SK-N-SH (cell line): ENCODE measurements at regions of chr7 and their contacts with region 1.

Region 1: GRCh38 chr7:107150375-107151073 is 18.3 kb upstream of the HBP1 start:
- DNase-seq: peak; percentile 49
- H3K4me3 ChIP-seq: no peak overlapping the region
- H3K27ac ChIP-seq: no peak overlapping the region
- H3K4me1 ChIP-seq: peaks cover 0 to 6% of the 10 kb centered on the region in 2 experiments; a peak in 2 of 4 replicates
- H3K27me3 ChIP-seq: no peaks in the 10 kb centered on the region
- CTCF ChIP-seq: peak; percentile 91
- EP300 ChIP-seq: no peak
- RAD21 ChIP-seq: peak; percentile 91

Region 2: DNA sequence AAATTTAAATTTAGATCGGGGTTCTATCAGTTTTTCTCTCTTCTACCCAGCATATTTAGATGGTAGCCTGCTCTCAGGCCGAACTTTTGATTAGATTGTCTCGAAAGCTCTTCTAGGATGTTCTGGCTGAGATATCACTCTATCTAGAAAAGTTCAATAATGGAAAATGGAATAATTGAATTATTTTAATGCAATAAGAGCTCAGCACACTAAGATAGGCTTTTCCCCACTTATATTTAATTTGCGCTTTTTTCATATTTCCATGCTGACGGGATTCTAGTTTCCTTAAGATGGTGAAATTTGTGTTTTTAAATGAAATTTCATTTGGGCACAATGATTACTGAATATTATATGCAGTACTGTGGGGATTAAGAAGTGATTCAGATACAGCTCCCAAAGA is 211.7 kb before region 1 on chr7:
- CTCF ChIA-PET with region 1: interaction called, 118 read pairs
- POLR2A ChIA-PET with region 1: no interaction called
- DNase-seq: peak; percentile 45
- H3K4me3 ChIP-seq: no peak overlapping the region
- H3K27ac ChIP-seq: no peak overlapping the region
- H3K4me1 ChIP-seq: no peaks in the 10 kb centered on the region
- H3K27me3 ChIP-seq: no peaks in the 10 kb centered on the region
- CTCF ChIP-seq: no peak
- EP300 ChIP-seq: peak in 1 of 2 experiments; percentile 70; a peak in 2 of 4 replicates
- RAD21 ChIP-seq: 0 out of 2 replicates have a peak, but pooled peaks have one; percentile 4

Region 3: DNA sequence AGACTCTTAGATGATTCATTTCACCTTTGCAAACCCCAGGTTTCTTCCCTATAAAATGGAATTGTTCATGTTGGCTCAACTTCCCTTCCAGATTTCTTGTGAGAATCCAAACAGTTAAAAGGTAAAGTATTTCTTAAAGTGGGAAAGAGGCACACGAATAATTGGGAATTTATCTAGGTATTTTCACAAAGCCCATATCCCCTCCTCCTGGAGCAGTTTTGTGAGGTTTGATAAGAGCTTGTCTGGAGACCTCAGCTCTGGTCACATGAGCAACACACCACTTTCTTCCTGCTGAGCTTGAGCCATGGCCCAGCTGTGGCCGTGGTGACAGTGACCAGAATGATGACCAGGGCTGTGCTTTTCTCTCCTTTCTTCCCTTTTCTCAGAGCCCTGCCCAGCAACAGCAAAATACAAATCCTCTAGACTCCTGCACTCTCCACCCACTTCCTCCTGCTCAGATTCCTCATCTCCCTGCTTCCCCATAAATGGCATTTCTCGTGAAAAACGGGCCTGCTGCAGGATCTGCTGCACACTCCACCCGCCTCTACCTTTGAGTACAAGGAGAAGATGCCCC is 197.8 kb before region 1 on chr7:
- CTCF ChIA-PET with region 1: interaction called, 118 read pairs
- POLR2A ChIA-PET with region 1: no interaction called
- DNase-seq: no peak
- H3K4me3 ChIP-seq: no peak overlapping the region
- H3K27ac ChIP-seq: no peak overlapping the region
- H3K4me1 ChIP-seq: peaks cover 0 to 4% of the 10 kb centered on the region in 2 experiments; a peak in 1 of 4 replicates
- H3K27me3 ChIP-seq: no peaks in the 10 kb centered on the region
- CTCF ChIP-seq: no peak
- EP300 ChIP-seq: no peak
- RAD21 ChIP-seq: no peak

Region 4: DNA sequence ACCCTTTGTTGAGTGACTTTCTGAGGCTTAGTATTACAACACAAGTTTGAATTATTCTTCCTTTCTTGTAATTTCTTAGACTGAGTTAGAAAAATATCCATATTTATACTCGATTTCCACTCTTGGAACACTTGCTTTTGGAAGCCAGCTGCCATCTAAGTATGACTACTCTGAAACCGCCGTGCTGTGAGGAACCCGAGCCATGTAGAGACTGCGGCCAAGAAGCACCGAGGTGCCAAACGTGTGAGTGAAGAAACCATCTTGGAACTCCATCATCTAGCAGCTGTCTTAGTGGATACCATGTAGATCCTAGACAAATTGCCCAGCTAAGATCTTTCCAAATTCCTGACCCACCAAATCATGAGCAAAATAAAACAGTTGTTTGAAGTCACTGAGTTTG is 155.7 kb before region 1 on chr7:
- CTCF ChIA-PET with region 1: no interaction called
- POLR2A ChIA-PET with region 1: no interaction called
- DNase-seq: no peak
- H3K4me3 ChIP-seq: no peak overlapping the region
- H3K27ac ChIP-seq: no peak overlapping the region
- H3K4me1 ChIP-seq: no peaks in the 10 kb centered on the region; a peak in 1 of 4 replicates
- H3K27me3 ChIP-seq: no peaks in the 10 kb centered on the region
- CTCF ChIP-seq: no peak
- EP300 ChIP-seq: no peak
- RAD21 ChIP-seq: no peak

Region 5: GRCh38 chr7:107122486-107122911 is 28.0 kb before region 1 on chr7:
- CTCF ChIA-PET with region 1: interaction called, 13 read pairs
- POLR2A ChIA-PET with region 1: no interaction called
- DNase-seq: no peak
- H3K4me3 ChIP-seq: no peak overlapping the region
- H3K27ac ChIP-seq: no peak overlapping the region
- H3K4me1 ChIP-seq: peaks cover 5 to 12% of the 10 kb centered on the region in 2 experiments; a peak in 3 of 4 replicates
- H3K27me3 ChIP-seq: no peaks in the 10 kb centered on the region
- CTCF ChIP-seq: no peak
- EP300 ChIP-seq: no peak
- RAD21 ChIP-seq: no peak

Region 6: DNA sequence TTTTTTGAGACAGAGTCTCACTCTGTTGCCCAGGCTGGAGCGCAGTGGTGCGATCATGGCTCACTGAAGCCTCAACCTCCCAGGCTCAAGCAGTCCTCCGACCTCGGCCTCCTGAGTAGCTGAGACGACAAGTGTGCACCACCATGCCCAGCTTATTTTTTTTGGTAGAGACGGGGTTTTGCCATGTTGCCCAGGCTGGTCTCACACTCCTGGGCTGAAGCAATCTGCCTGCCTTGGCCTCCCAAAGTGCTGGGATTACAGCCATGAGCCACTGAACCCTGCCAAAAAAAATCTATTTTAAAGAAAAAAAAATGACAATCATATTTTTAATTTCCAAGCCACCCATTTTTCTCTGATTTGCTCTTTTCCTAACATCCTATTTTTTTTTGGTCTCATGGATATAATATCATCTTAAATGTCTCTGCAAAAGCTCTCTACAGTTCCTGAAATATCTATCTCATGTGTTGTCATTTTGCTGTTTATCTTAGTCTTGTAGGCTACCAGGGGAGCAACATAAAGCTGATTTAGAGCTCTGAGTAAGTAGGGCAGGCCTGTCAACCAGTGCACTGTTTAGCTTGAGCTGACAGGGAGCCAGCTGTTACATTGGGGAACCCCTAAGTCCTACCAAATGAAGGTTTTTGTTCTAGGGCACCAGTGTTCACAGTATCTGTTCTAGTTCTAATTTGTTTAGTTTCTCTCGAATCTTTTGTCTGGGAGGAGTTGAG is 11.7 kb before region 1 on chr7:
- CTCF ChIA-PET with region 1: interaction called, 90 read pairs
- POLR2A ChIA-PET with region 1: no interaction called
- DNase-seq: no peak
- H3K4me3 ChIP-seq: no peak overlapping the region
- H3K27ac ChIP-seq: no peak overlapping the region
- H3K4me1 ChIP-seq: no peaks in the 10 kb centered on the region; a peak in 1 of 4 replicates
- H3K27me3 ChIP-seq: no peaks in the 10 kb centered on the region
- CTCF ChIP-seq: no peak
- EP300 ChIP-seq: no peak
- RAD21 ChIP-seq: no peak

Region 7: GRCh38 chr7:107232568-107233090 is 82.1 kb after region 1 on chr7:
- CTCF ChIA-PET with region 1: no interaction called
- POLR2A ChIA-PET with region 1: no interaction called
- DNase-seq: no peak
- H3K4me3 ChIP-seq: no peak overlapping the region
- H3K27ac ChIP-seq: no peak overlapping the region
- H3K4me1 ChIP-seq: peaks cover 8 to 34% of the 10 kb centered on the region in 2 experiments
- H3K27me3 ChIP-seq: no peaks in the 10 kb centered on the region
- CTCF ChIP-seq: no peak
- EP300 ChIP-seq: no peak
- RAD21 ChIP-seq: no peak

Region 8: GRCh38 chr7:107274506-107274905 is 124.0 kb after region 1 on chr7:
- CTCF ChIA-PET with region 1: no interaction called
- POLR2A ChIA-PET with region 1: no interaction called
- DNase-seq: no peak
- H3K4me3 ChIP-seq: no peak overlapping the region
- H3K27ac ChIP-seq: no peak overlapping the region
- H3K4me1 ChIP-seq: no peaks in the 10 kb centered on the region
- H3K27me3 ChIP-seq: no peaks in the 10 kb centered on the region
- CTCF ChIP-seq: no peak
- EP300 ChIP-seq: no peak
- RAD21 ChIP-seq: no peak

Region 9: DNA sequence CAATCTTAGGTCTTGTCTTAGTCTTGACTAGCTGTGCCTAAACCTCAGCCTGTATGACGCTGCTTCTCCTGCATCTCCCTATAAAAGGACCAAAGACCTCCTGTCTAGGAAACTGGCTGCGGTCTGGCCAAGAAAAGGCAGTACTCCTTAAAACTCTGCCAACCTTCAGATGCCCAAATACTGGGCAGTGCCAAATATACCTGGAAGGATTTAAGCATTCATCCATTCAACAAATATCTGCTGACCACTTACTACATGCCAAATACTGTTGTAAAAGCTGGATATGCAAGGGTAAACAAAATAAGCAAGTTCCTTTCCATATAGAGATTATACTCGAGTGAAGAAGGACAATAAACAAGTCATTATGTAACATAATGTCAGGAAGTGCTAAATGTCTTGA is 154.1 kb after region 1 on chr7:
- CTCF ChIA-PET with region 1: no interaction called
- POLR2A ChIA-PET with region 1: no interaction called
- DNase-seq: no peak
- H3K4me3 ChIP-seq: no peak overlapping the region
- H3K27ac ChIP-seq: no peak overlapping the region
- H3K4me1 ChIP-seq: no peaks in the 10 kb centered on the region; a peak in 1 of 4 replicates
- H3K27me3 ChIP-seq: no peaks in the 10 kb centered on the region
- CTCF ChIP-seq: no peak
- EP300 ChIP-seq: no peak
- RAD21 ChIP-seq: no peak

Region 10: DNA sequence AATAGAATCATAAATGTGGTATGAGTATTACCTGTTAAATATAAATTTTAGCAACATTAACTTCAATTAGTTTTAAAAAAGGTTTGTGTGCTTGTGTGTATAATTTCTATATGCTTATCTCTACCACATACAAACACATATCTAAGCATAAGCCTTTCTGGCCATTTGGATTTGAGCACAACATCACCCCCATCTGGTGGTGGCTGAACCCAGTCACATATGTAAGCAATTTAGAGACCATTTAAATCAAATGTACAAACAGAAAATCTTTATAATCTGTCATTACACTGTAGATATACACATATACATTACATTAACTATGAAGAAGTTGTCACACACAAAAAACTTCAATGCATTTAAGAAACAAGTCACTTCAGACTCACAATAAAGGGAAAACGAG is 351.1 kb after region 1 on chr7:
- CTCF ChIA-PET with region 1: interaction called, 12 read pairs
- POLR2A ChIA-PET with region 1: no interaction called
- DNase-seq: peak; percentile 56
- H3K4me3 ChIP-seq: no peak overlapping the region
- H3K27ac ChIP-seq: no peak overlapping the region
- H3K4me1 ChIP-seq: peaks cover 0 to 2% of the 10 kb centered on the region in 2 experiments; a peak in 2 of 4 replicates
- H3K27me3 ChIP-seq: no peaks in the 10 kb centered on the region
- CTCF ChIP-seq: peak; percentile 70
- EP300 ChIP-seq: no peak
- RAD21 ChIP-seq: peak; percentile 83